Posterior cingulate gyrus (tissue), 11 donors: ENCODE measurements at regions of chr1 and their contacts with region 1.

Region 1: GRCh38 chr1:244272471-244273261 is 179.0 kb downstream of the ADSS2 start:
- DNase-seq: peak in 9 of 10 donors; percentile 44 to 92 (median 69)

Region 2: GRCh38 chr1:243343970-243344937 is 928.4 kb before region 1 on chr1:
- intact Hi-C with region 1: loop called (anchors 1 kb)
- DNase-seq: no peak

Region 3: DNA sequence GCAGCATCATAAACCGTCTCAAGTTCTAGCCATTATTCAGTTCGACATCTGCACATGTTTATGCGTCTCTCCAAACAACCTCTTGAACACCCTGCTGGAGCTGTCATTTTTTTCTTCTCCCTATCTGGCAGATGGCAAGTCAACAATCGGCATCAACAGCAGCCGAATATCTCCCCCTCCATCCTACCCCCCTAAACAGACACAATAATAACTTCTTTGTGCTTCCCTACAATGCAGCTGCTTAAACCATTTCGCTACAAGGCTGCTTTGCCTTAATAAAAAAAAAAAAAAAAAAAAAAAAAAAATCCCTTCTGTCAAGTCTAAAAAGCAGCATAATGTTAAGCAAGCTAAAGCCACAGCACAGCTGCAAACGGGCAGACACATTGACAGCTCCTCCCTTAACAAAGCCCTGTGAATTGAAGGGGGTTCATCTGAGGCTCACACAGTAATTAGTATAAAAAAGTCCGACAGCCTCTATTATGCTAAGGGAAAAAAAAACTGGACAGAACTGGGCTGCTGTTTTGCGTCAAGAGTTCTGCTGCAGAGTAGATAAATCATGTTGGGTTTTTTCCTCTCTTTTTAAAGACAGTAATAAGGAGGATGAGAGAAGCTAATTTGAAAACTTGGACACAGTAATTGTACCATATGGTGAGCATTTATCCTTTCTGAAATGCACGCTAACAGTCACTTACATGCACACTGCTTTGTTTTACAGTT is 559.0 kb before region 1 on chr1:
- intact Hi-C with region 1: loop called (anchors 5 kb)
- DNase-seq: peak in 6 of 10 donors; percentile 18 to 83 (median 40)

Region 4: GRCh38 chr1:243848858-243849420 is 423.7 kb before region 1 on chr1:
- intact Hi-C with region 1: loop called (anchors 2 kb)
- DNase-seq: peak; percentile 55 to 94 (median 64)

Region 5: DNA sequence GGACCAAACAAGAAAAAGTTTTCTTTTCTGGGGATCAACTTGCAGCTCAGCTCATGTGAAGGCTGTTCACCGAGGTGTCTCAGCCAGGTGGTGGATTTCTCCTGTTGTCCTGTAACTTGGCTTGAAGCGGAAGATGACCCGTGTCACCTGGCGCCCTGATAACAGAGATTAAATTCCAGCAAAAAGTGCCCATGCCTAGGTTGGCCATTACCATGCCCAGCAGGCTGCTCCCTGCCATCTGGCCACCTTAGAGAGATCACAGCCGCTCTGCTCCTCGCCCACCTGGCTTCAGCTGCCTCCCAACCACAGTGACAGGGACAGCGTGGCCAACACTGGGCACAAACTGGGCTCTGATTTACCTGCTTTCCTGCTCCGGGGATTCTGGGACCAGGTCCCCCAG is 72.1 kb before region 1 on chr1:
- intact Hi-C with region 1: no loop called
- DNase-seq: no peak

Region 6: GRCh38 chr1:244214009-244214967 is 58.4 kb before region 1 on chr1:
- intact Hi-C with region 1: loop called (anchors 5 kb)
- DNase-seq: no peak